Activated CD8-positive, alpha-beta memory T cell treated with anti-CD3 and anti-CD28 coated beads, Interleukin-2, amount 10 ng/mL, durations not matched to agents 7 days and 5 days (primary cell): ENCODE measurements at regions of chr6 and their contacts with region 1.

Region 1: DNA sequence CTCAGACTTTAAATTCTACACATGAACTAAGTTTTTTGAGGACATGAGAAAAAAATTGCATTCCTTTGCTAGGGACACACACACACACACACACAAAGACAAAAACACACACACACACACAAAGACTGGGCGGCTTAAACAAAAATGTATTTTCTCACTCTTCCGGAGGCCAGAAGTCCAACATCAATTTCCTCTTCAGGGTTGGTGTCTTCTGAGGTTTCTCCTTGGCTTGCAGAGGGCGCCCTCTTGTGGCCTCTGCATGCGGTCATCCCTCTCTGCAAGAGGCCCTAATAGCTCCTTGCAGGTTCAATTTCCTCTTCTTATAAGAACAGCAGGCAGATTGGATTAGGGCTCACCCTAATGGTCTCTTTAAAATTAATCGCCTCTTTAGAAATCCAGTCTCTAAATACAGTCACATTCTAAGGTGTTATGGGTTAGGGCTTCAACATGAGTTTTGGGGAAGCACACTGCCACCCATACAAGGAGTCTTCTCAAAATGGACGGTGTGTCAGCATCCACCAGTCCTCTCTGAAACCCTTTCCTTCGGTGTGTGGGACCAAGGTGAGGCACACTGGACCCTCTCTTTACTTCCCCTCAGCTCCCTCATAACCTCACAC is 61.4 kb downstream of the GPR6 start:
- DNase-seq: peak; percentile 92
- ATAC-seq: peak; percentile 88
- H3K4me3 Mint-ChIP-seq: peak overlapping the region; percentile 77
- H3K27ac Mint-ChIP-seq: peak overlapping the region; percentile 85
- H3K4me1 Mint-ChIP-seq: peaks cover 20% of the 10 kb centered on the region
- H3K27me3 Mint-ChIP-seq: no peaks in the 10 kb centered on the region

Region 2: GRCh38 chr6:109491207-109491938 is 548.1 kb before region 1 on chr6:
- CTCF ChIA-PET with region 1: interaction called, 12 read pairs
- DNase-seq: peak; percentile 70
- ATAC-seq: peak; percentile 99
- H3K4me3 Mint-ChIP-seq: peak overlapping the region; percentile 57
- H3K27ac Mint-ChIP-seq: peak overlapping the region; percentile 91
- H3K4me1 Mint-ChIP-seq: peaks cover 34% of the 10 kb centered on the region
- H3K27me3 Mint-ChIP-seq: peaks cover 5% of the 10 kb centered on the region

Region 3: GRCh38 chr6:109690737-109691621 is 348.5 kb before region 1 on chr6 and contains the starts of genes AK9 and FIG4:
- CTCF ChIA-PET with region 1: interaction called, 22 read pairs
- DNase-seq: peak; percentile 93
- ATAC-seq: peak; percentile 98
- H3K4me3 Mint-ChIP-seq: peak within 1 kb of the TSS; percentile 92
- H3K27ac Mint-ChIP-seq: peak within 1 kb of the TSS; percentile 87
- H3K4me1 Mint-ChIP-seq: peaks cover 24% of the 10 kb centered on the region
- H3K27me3 Mint-ChIP-seq: peaks cover 5% of the 10 kb centered on the region
- total RNA-seq, gene AK9: 4.4 to 6.2 TPM
- total RNA-seq, gene FIG4: 9.0 to 11.1 TPM

Region 4: DNA sequence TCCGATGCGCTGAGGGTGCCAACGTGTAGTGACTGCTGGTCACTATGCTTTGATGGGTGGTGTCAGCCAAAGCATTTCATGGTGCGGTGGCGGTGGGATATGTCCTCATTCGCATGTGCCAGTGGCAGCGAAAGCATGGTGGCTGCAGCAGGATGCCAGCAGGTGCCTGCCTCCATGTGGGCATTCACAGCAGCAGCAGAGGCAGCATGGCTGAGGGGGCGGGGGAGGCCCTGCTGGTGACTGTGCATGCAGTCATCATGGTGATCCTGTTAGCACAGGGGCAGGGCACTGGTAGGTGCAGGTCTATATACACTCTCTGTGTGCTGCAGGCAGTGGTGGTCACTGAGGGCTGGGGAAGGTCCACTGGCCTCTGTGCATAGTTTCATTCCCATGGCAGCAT is 326.4 kb before region 1 on chr6:
- CTCF ChIA-PET with region 1: interaction called, 27 read pairs
- DNase-seq: no peak
- ATAC-seq: no peak
- H3K4me3 Mint-ChIP-seq: no peak overlapping the region
- H3K27ac Mint-ChIP-seq: no peak overlapping the region
- H3K4me1 Mint-ChIP-seq: no peaks in the 10 kb centered on the region
- H3K27me3 Mint-ChIP-seq: no peaks in the 10 kb centered on the region

Region 5: GRCh38 chr6:110020888-110021287 is 18.6 kb before region 1 on chr6:
- CTCF ChIA-PET with region 1: interaction called, 15 read pairs
- DNase-seq: peak; percentile 47
- ATAC-seq: peak; percentile 47
- H3K4me3 Mint-ChIP-seq: no peak overlapping the region
- H3K27ac Mint-ChIP-seq: no peak overlapping the region
- H3K4me1 Mint-ChIP-seq: peaks cover 20% of the 10 kb centered on the region
- H3K27me3 Mint-ChIP-seq: peaks cover 3% of the 10 kb centered on the region

Region 6: GRCh38 chr6:110063594-110064263 is 24.3 kb after region 1 on chr6:
- CTCF ChIA-PET with region 1: interaction called, 29 read pairs
- DNase-seq: peak; percentile 74
- ATAC-seq: peak; percentile 87
- H3K4me3 Mint-ChIP-seq: no peak overlapping the region
- H3K27ac Mint-ChIP-seq: no peak overlapping the region
- H3K4me1 Mint-ChIP-seq: peaks cover 14% of the 10 kb centered on the region
- H3K27me3 Mint-ChIP-seq: peaks cover 75% of the 10 kb centered on the region

Region 7: DNA sequence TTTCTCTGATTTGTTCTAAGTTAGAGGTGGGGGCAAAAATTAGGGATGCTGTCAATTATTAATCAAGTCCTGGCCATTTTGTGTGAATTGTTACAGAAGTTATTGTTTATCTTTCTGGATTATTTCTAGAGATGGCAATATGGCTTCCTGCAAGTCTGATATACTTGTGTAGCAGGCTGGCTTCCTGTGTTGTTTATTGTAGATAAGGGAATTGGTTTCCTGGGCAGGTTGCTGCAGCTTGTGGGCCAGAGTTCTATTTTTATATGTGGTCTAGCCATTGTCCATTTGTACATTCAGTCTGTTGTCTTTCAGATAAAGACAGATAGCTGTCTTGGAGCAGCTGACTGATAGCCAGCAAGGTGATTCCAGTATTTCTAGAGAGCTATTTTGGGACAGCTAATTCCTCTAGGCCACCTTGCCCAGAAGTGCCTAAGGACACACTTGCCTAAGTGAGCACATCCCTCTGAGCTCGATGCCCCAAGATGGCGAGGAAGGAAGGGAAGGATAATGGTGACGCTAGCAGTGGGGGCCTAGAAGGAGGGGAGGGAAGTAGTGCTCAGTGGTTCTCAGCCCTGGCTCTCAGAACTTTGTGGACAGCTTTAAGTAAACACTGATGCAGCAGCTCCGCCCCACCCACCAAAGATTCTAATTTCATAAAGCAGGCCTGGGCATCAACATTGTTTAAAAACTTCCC is 350.4 kb after region 1 on chr6:
- CTCF ChIA-PET with region 1: interaction called, 50 read pairs
- DNase-seq: no peak
- ATAC-seq: no peak
- H3K4me3 Mint-ChIP-seq: no peak overlapping the region
- H3K27ac Mint-ChIP-seq: peak overlapping the region; percentile 8
- H3K4me1 Mint-ChIP-seq: peaks cover 16% of the 10 kb centered on the region
- H3K27me3 Mint-ChIP-seq: peaks cover 5% of the 10 kb centered on the region